ENCODE measurements at regions of chr12 and their contacts with region 1.

Region 1: GRCh38 chr12:78241446-78241845 is 410.8 kb downstream of the NAV3 start:
- DNase-seq: no peak
- H3K4me3 ChIP-seq: no peak overlapping the region
- H3K27ac ChIP-seq: no peak overlapping the region
- H3K4me1 ChIP-seq: no peaks in the 10 kb centered on the region
- H3K27me3 ChIP-seq: no peaks in the 10 kb centered on the region
- CTCF ChIP-seq: no peak

Region 2: GRCh38 chr12:78284417-78284816 is 43.0 kb after region 1 on chr12:
- CTCF ChIA-PET with region 1: no interaction called
- dilution Hi-C with region 1: loop called (anchors 5 kb)
- in situ Hi-C with region 1: no loop called
- intact Hi-C with region 1: no loop called
- DNase-seq: no peak
- H3K4me3 ChIP-seq: no peak overlapping the region
- H3K27ac ChIP-seq: no peak overlapping the region
- H3K4me1 ChIP-seq: no peaks in the 10 kb centered on the region
- H3K27me3 ChIP-seq: no peaks in the 10 kb centered on the region
- CTCF ChIP-seq: no peak

Measured in mammary epithelial cell (primary cell).